ENCODE measurements at regions of chr16 and their contacts with region 1.

Region 1: GRCh38 chr16:10256784-10257641 is 74.8 kb upstream of the GRIN2A start:
- DNase-seq: peak; percentile 12
- H3K4me3 Mint-ChIP-seq: no peak overlapping the region
- H3K27ac Mint-ChIP-seq: no peak overlapping the region
- H3K4me1 Mint-ChIP-seq: peaks cover 6% of the 10 kb centered on the region
- H3K27me3 Mint-ChIP-seq: peaks cover 3% of the 10 kb centered on the region

Region 2: GRCh38 chr16:10314811-10315210 is 57.8 kb after region 1 on chr16:
- intact Hi-C with region 1: loop called (anchors 5 kb)
- DNase-seq: no peak
- H3K4me3 Mint-ChIP-seq: no peak overlapping the region
- H3K27ac Mint-ChIP-seq: no peak overlapping the region
- H3K4me1 Mint-ChIP-seq: peaks cover 6% of the 10 kb centered on the region
- H3K27me3 Mint-ChIP-seq: no peaks in the 10 kb centered on the region

Measured in activated T-helper 2 cell treated with anti-CD3 and anti-CD28 coated beads, Interferon-gamma antibody, Interleukin-2, Interleukin-4, amounts not matched to agents 10 μg/mL and 5 μg/mL and 100 μg/mL, durations not matched to agents 14 hours and 24 hours and 36 hours (primary cell).